Activated CD4-positive, alpha-beta memory T cell treated with anti-CD3 and anti-CD28 coated beads for 36 hours (primary cell): ENCODE measurements at regions of chr6 and their contacts with region 1.

Region 1: GRCh38 chr6:33147807-33148666 is 44.2 kb downstream of the COL11A2 start:
- DNase-seq: no peak
- H3K4me3 Mint-ChIP-seq: no peak overlapping the region
- H3K27ac Mint-ChIP-seq: no peak overlapping the region
- H3K4me1 Mint-ChIP-seq: no peaks in the 10 kb centered on the region
- H3K27me3 Mint-ChIP-seq: peaks cover 24% of the 10 kb centered on the region

Region 2: GRCh38 chr6:33014841-33015634 is 133.0 kb before region 1 on chr6:
- CTCF ChIA-PET with region 1: interaction called, 22 read pairs
- POLR2A ChIA-PET with region 1: no interaction called
- intact Hi-C with region 1: no loop called
- DNase-seq: peak; percentile 34
- H3K4me3 Mint-ChIP-seq: no peak overlapping the region
- H3K27ac Mint-ChIP-seq: no peak overlapping the region
- H3K4me1 Mint-ChIP-seq: peaks cover 12% of the 10 kb centered on the region
- H3K27me3 Mint-ChIP-seq: peaks cover 15% of the 10 kb centered on the region

Region 3: DNA sequence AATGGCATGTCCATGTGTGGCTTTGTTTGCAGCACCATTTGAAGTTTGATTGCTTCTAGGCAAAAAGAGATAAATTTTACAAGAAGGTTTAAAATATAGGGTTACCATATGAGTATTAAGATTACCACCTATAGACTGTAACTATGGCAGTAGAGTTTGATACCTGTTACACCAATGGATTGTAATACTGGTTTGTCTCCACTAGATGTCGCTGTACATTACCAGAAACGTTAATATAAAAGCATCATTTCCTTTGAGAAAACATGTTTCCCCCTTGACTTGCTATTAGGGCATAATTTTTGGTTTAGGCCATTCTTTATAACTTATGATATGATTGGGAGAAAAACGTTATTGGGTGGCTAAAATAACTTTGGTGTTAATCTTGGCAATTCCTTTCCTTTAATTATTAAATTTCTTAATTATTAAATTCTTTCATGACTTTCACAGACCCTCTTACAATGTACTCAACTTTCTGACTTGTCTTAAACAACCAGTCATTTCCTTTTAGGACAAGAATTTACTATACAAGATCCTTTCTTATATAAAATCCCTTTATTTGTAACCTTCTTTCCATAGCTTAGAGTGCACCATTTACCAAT is 29.4 kb before region 1 on chr6:
- CTCF ChIA-PET with region 1: interaction called, 22 read pairs
- POLR2A ChIA-PET with region 1: no interaction called
- intact Hi-C with region 1: loop called (anchors 1 kb)
- DNase-seq: no peak
- H3K4me3 Mint-ChIP-seq: no peak overlapping the region
- H3K27ac Mint-ChIP-seq: no peak overlapping the region
- H3K4me1 Mint-ChIP-seq: peaks cover 7% of the 10 kb centered on the region
- H3K27me3 Mint-ChIP-seq: peaks cover 41% of the 10 kb centered on the region

Region 4: DNA sequence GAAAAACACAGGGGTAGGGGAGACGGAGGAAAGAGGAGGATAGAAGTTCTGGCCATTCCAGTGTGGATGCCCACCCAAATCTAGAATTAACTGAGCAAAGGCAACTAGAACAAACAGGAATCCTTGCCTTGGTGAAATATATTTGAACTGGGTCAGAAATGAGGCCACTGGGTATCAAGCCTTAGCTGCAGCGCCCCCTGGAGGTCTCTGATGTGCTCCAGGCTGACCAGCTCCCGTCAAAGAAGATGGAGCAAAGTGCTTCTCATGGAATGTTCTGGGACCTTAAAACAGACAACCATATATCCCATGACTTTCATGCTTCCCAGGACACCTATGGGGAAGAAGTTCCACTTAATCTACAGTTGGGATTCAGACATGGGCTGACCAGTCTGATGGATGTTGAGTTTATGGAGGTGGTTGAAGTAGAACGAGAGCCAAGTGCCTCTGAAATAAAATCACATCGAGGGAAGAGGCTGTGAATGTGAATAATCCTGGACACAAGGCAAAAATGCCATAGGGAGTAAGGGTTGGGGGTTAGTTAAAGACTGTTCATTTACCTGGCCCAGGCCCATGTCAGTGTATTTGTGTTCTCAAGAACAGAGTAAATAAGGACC is 21.8 kb before region 1 on chr6:
- CTCF ChIA-PET with region 1: interaction called, 22 read pairs
- POLR2A ChIA-PET with region 1: no interaction called
- intact Hi-C with region 1: no loop called
- DNase-seq: peak; percentile 75
- H3K4me3 Mint-ChIP-seq: no peak overlapping the region
- H3K27ac Mint-ChIP-seq: no peak overlapping the region
- H3K4me1 Mint-ChIP-seq: no peaks in the 10 kb centered on the region
- H3K27me3 Mint-ChIP-seq: peaks cover 26% of the 10 kb centered on the region

Region 5: DNA sequence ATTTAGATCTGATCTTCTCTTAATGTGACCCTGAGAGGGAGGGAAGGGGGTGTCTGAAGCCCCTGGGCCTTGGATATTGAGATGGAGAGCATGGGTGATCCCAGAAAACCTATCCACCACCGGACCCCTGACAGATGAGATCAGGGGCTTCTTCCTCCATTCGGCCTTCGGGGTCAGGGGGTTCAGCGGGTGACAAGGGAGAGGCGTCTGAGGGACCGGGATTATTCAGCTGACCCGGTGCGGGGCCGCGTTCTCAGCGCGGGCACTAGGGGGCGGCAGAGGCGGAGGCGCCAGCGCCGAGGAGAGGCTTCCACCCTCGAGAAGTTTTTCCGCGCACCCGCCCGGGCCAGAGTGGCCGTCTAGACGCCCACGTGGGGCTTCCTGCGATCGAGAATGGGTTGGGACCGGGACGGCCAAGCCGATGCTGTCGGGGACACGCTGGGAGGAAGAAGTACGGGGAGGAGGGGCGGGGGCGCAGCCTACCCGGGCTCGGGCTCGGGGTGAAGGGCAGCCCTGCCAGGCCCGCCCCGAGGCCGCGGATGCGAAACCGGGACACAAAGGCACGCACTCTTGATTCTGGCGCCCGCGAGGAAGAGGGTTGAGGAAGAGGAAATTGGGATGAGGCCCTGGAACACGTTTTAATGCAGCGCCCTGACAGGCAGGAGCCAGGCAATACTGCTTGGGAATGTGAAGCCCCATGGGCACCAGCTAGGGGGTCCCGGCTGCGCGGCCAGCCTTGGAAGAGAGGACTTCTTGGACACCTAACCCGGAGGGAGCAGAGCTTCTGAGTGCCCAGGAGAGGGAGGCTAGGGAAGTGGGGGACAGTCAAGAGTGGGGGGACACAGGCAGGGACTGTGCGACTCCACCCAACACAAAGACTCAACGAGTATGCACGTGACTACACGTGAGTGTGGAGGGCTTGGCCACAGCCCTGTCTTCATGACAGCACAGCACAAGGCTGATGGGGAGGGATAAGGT is 13.6 kb after region 1 on chr6:
- CTCF ChIA-PET with region 1: interaction called, 12 read pairs
- POLR2A ChIA-PET with region 1: no interaction called
- intact Hi-C with region 1: no loop called
- DNase-seq: peak; percentile 88
- H3K4me3 Mint-ChIP-seq: peak overlapping the region; percentile 76
- H3K27ac Mint-ChIP-seq: no peak overlapping the region
- H3K4me1 Mint-ChIP-seq: peaks cover 13% of the 10 kb centered on the region
- H3K27me3 Mint-ChIP-seq: peaks cover 6% of the 10 kb centered on the region